ENCODE measurements at regions of chr5 and their contacts with region 1.

Region 1: GRCh38 chr5:114305402-114306211 is 56.3 kb upstream of the KCNN2 start:
- DNase-seq: no peak
- H3K4me3 ChIP-seq: no peak overlapping the region
- H3K27ac ChIP-seq: no peak overlapping the region
- H3K4me1 ChIP-seq: no peaks in the 10 kb centered on the region
- H3K27me3 ChIP-seq: no peaks in the 10 kb centered on the region
- CTCF ChIP-seq: peak in 3 of 4 experiments; percentile 15 to 22 (median 21)
- POLR2A ChIP-seq: no peak

Region 2: GRCh38 chr5:113806250-113806649 is 499.4 kb before region 1 on chr5:
- intact Hi-C with region 1: loop called (anchors 10 kb)
- DNase-seq: no peak
- H3K4me3 ChIP-seq: no peak overlapping the region
- H3K27ac ChIP-seq: peak overlapping the region in 1 of 2 donors; percentile 8
- H3K4me1 ChIP-seq: no peaks in the 10 kb centered on the region
- H3K27me3 ChIP-seq: no peaks in the 10 kb centered on the region
- CTCF ChIP-seq: peak in 3 of 4 experiments; percentile 18 to 50 (median 48)
- POLR2A ChIP-seq: no peak

Region 3: DNA sequence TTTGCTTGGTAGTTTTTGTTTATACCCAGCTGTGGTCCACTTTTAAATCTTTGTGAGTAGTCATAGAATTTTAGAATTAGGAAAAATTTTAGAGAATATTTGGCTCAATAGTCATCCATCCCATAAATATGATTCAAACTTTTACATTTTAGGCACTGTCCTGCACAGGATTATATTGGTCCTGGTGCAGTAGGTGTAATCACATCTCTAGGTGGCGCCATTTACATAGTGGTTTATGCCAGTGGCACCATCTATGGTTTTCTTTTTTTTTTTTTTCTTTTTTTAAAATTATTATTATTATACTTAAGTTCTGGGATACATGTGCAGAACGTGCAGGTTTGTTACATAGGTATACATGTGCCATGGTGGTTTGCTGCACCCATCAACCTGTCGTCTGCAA is 204.5 kb before region 1 on chr5:
- intact Hi-C with region 1: loop called (anchors 5 kb)
- DNase-seq: peak; percentile 47
- H3K4me3 ChIP-seq: no peak overlapping the region
- H3K27ac ChIP-seq: no peak overlapping the region
- H3K4me1 ChIP-seq: no peaks in the 10 kb centered on the region
- H3K27me3 ChIP-seq: no peaks in the 10 kb centered on the region
- CTCF ChIP-seq: peak in 3 of 4 experiments; percentile 11 to 38 (median 35)
- POLR2A ChIP-seq: no peak